ENCODE measurements at regions of chr22 and their contacts with region 1.

Region 1: GRCh38 chr22:39514373-39514973 is 5.9 kb upstream of the ATF4 start:
- DNase-seq: peak; percentile 67
- H3K4me3 Mint-ChIP-seq: no peak overlapping the region
- H3K27ac Mint-ChIP-seq: peak overlapping the region; percentile 8
- H3K4me1 Mint-ChIP-seq: peaks cover 36% of the 10 kb centered on the region
- H3K27me3 Mint-ChIP-seq: no peaks in the 10 kb centered on the region

Region 2: GRCh38 chr22:39400970-39401631 is 113.4 kb before region 1 on chr22:
- CTCF ChIA-PET with region 1: no interaction called
- POLR2A ChIA-PET with region 1: no interaction called
- intact Hi-C with region 1: no loop called
- DNase-seq: no peak
- H3K4me3 Mint-ChIP-seq: peak overlapping the region; percentile 86
- H3K27ac Mint-ChIP-seq: no peak overlapping the region
- H3K4me1 Mint-ChIP-seq: peaks cover 33% of the 10 kb centered on the region
- H3K27me3 Mint-ChIP-seq: no peaks in the 10 kb centered on the region

Region 3: GRCh38 chr22:39490135-39490798 is 24.2 kb before region 1 on chr22:
- CTCF ChIA-PET with region 1: interaction called, 51 read pairs
- POLR2A ChIA-PET with region 1: interaction called, 3 read pairs
- intact Hi-C with region 1: loop called (anchors 1 kb)
- DNase-seq: peak; percentile 86
- H3K4me3 Mint-ChIP-seq: no peak overlapping the region
- H3K27ac Mint-ChIP-seq: no peak overlapping the region
- H3K4me1 Mint-ChIP-seq: peaks cover 8% of the 10 kb centered on the region
- H3K27me3 Mint-ChIP-seq: no peaks in the 10 kb centered on the region

Region 4: DNA sequence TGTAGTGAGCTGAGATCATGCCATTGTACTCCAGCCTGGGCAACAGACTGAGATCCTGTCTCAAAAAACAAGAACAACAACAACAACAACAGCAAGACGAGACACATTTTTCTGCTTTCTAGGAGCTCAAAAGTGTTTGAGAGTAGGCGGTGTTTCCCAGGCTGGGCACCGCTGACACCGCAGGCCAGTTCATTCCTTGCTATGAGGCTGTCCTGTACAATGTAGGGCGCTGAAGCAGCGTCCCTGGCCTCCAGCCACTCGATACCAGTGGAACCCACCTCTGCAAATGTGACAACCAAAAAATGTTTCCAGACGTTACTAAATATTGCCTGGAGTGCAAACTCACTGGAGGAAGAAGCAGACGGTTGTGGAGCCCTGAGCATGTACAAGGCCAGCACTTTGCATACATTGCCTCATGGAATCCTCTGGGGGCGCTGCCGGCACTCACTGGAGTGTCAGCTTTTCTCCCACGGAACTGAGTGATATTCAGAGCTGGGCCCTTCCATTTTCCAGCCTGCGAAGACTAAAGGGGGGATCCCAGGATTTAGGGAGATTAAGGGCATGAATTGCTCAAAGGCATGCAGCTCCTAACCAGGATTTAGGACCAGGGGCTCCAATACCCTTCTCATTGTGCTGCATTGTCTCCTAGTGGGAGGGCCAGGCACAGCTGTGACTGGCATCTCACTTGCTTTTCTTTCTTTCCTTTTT is 18.2 kb before region 1 on chr22:
- CTCF ChIA-PET with region 1: interaction called, 51 read pairs
- POLR2A ChIA-PET with region 1: interaction called, 20 read pairs
- intact Hi-C with region 1: loop called (anchors 1 kb)
- DNase-seq: peak; percentile 76
- H3K4me3 Mint-ChIP-seq: no peak overlapping the region
- H3K27ac Mint-ChIP-seq: no peak overlapping the region
- H3K4me1 Mint-ChIP-seq: peaks cover 9% of the 10 kb centered on the region
- H3K27me3 Mint-ChIP-seq: no peaks in the 10 kb centered on the region

Region 5: GRCh38 chr22:39502109-39502788 is 12.2 kb before region 1 on chr22 and contains the start of gene MIEF1:
- CTCF ChIA-PET with region 1: interaction called, 44 read pairs
- POLR2A ChIA-PET with region 1: interaction called, 20 read pairs
- intact Hi-C with region 1: no loop called
- DNase-seq: peak; percentile 98
- H3K4me3 Mint-ChIP-seq: peak within 1 kb of the TSS; percentile 96
- H3K27ac Mint-ChIP-seq: peak within 1 kb of the TSS; percentile 87
- H3K4me1 Mint-ChIP-seq: peaks cover 43% of the 10 kb centered on the region
- H3K27me3 Mint-ChIP-seq: no peaks in the 10 kb centered on the region
- total RNA-seq, gene MIEF1: 40.3 to 43.1 TPM

Region 6: GRCh38 chr22:39690881-39691605 is 176.6 kb after region 1 on chr22:
- CTCF ChIA-PET with region 1: no interaction called
- POLR2A ChIA-PET with region 1: no interaction called
- intact Hi-C with region 1: no loop called
- DNase-seq: peak; percentile 50
- H3K4me3 Mint-ChIP-seq: no peak overlapping the region
- H3K27ac Mint-ChIP-seq: no peak overlapping the region
- H3K4me1 Mint-ChIP-seq: no peaks in the 10 kb centered on the region
- H3K27me3 Mint-ChIP-seq: peaks cover 8% of the 10 kb centered on the region

Measured in activated CD4-positive, alpha-beta memory T cell treated with anti-CD3 and anti-CD28 coated beads for 36 hours (primary cell).